Naive thymus-derived CD4-positive, alpha-beta T cell (primary cell): ENCODE measurements at regions of chr6 and their contacts with region 1.

Region 1: GRCh38 chr6:37946057-37946456 is 126.5 kb downstream of the ZFAND3 start:
- DNase-seq: no peak
- ATAC-seq: no peak
- H3K4me3 ChIP-seq: no peak overlapping the region
- H3K4me3 Mint-ChIP-seq: no peak overlapping the region
- H3K27ac ChIP-seq: no peak overlapping the region
- H3K27ac Mint-ChIP-seq: no peak overlapping the region
- H3K4me1 ChIP-seq: peaks cover 7 to 12% of the 10 kb centered on the region in 2 donors
- H3K4me1 Mint-ChIP-seq: peaks cover 25 to 74% (median 67%) of the 10 kb centered on the region in 7 donors
- H3K27me3 ChIP-seq: no peaks in the 10 kb centered on the region
- H3K27me3 Mint-ChIP-seq: no peaks in the 10 kb centered on the region

Region 2: DNA sequence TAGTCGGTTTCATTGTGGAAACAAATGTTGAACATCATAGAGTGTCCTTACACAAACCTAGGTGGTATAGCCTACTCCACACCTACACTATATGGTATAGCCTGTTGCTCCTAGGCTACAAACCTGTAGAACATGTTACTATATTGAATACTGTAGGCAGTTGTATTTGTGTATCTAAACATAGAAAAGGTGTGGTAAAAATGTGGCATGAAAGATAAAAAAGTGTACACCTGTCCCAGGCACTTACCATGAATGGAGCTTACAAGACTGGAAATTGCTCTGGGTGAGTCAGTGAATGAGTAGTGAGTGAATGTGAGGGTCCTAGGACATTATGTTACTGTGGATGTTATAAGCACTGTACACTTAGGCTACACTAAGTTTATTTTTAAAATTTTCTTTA is 23.5 kb before region 1 on chr6:
- CTCF ChIA-PET with region 1: no interaction called
- POLR2A ChIA-PET with region 1: no interaction called
- intact Hi-C with region 1: loop called in 1 of 2 experiments (anchors 2 kb)
- DNase-seq: no peak
- ATAC-seq: no peak
- H3K4me3 ChIP-seq: no peak overlapping the region
- H3K4me3 Mint-ChIP-seq: no peak overlapping the region
- H3K27ac ChIP-seq: no peak overlapping the region
- H3K27ac Mint-ChIP-seq: peak overlapping the region in 1 of 9 donors; percentile 38
- H3K4me1 ChIP-seq: peaks cover 13 to 14% of the 10 kb centered on the region in 2 donors
- H3K4me1 Mint-ChIP-seq: peaks cover 8 to 79% (median 73%) of the 10 kb centered on the region in 7 donors
- H3K27me3 ChIP-seq: peaks cover 0 to 3% of the 10 kb centered on the region in 2 donors
- H3K27me3 Mint-ChIP-seq: no peaks in the 10 kb centered on the region

Region 3: DNA sequence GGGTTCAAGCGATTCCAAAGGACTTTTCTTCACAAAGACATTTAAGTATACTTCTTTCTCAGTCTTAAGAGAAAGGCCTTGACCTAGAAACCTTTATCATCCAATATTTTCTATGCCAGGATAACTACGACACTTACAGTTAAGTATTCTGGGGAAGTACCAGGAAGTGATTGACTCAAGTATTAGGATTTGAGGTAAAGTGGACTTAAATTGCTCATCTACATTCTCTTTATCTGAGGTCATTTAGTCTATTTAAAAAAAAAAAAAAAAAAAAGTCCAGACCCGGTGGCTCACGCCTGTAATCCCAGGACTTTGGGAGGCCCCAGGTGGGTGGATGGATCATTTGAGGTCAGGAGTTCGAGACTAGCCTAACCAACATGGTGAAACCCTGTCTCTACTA is 11.8 kb before region 1 on chr6:
- CTCF ChIA-PET with region 1: no interaction called
- POLR2A ChIA-PET with region 1: no interaction called
- intact Hi-C with region 1: no loop called
- DNase-seq: no peak
- ATAC-seq: no peak
- H3K4me3 ChIP-seq: no peak overlapping the region
- H3K4me3 Mint-ChIP-seq: no peak overlapping the region
- H3K27ac ChIP-seq: no peak overlapping the region
- H3K27ac Mint-ChIP-seq: no peak overlapping the region
- H3K4me1 ChIP-seq: peaks cover 7 to 16% of the 10 kb centered on the region in 2 donors
- H3K4me1 Mint-ChIP-seq: peaks cover 26 to 79% (median 52%) of the 10 kb centered on the region in 7 donors
- H3K27me3 ChIP-seq: no peaks in the 10 kb centered on the region
- H3K27me3 Mint-ChIP-seq: no peaks in the 10 kb centered on the region